ENCODE measurements at regions of chr7 and their contacts with region 1.

Region 1: DNA sequence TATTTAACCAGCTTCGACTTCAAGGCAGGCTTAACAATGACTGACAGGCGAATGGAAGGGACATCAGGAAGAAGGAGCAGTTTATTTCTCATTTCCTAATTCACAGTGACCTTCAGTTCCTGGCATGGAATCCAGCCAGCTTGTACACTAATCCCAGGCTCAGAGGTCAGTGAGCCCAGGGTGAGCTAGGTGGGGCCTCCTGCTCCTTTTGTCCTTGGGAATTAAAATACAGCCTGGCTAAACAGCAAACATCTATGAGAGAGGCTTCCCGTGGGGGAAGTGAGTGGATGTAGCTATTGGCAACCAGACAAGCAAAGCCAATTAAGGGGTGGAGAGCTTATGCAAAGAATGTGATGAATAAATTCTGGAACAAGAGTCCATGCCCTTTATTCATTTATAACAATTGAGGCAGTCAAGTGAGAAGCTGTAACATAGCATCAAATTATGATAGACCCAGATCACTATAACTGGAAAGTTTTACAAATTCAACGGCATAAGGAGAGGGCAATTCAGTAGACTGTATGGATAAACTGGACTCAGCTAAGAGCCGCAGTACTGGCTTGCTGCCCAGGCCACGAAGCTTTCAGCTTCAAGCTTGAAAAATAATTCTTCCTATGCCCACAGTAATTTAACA is 57.1 kb downstream of the STK17A start:
- DNase-seq: peak; percentile 72
- H3K4me3 Mint-ChIP-seq: no peak overlapping the region
- H3K27ac Mint-ChIP-seq: peak overlapping the region; percentile 84
- H3K4me1 Mint-ChIP-seq: peaks cover 38% of the 10 kb centered on the region
- H3K27me3 Mint-ChIP-seq: no peaks in the 10 kb centered on the region
- CTCF ChIP-seq: no peak

Region 2: GRCh38 chr7:43625453-43625852 is 14.5 kb before region 1 on chr7:
- CTCF ChIA-PET with region 1: no interaction called
- POLR2A ChIA-PET with region 1: interaction called, 13 read pairs
- intact Hi-C with region 1: no loop called
- DNase-seq: no peak
- H3K4me3 Mint-ChIP-seq: no peak overlapping the region
- H3K27ac Mint-ChIP-seq: peak overlapping the region; percentile 15
- H3K4me1 Mint-ChIP-seq: peaks cover 20% of the 10 kb centered on the region
- H3K27me3 Mint-ChIP-seq: no peaks in the 10 kb centered on the region
- CTCF ChIP-seq: no peak